Left ventricle myocardium inferior (tissue), 1 donor: ENCODE measurements at regions of chr2 and their contacts with region 1.

Region 1: GRCh38 chr2:129388870-129389269 is 590.6 kb upstream of the RAB6C start:
- DNase-seq: no peak
- H3K4me3 ChIP-seq: no peak overlapping the region
- H3K27ac ChIP-seq: no peak overlapping the region
- H3K4me1 ChIP-seq: no peaks in the 10 kb centered on the region
- H3K27me3 ChIP-seq: peaks cover 21% of the 10 kb centered on the region
- CTCF ChIP-seq: no peak

Region 2: DNA sequence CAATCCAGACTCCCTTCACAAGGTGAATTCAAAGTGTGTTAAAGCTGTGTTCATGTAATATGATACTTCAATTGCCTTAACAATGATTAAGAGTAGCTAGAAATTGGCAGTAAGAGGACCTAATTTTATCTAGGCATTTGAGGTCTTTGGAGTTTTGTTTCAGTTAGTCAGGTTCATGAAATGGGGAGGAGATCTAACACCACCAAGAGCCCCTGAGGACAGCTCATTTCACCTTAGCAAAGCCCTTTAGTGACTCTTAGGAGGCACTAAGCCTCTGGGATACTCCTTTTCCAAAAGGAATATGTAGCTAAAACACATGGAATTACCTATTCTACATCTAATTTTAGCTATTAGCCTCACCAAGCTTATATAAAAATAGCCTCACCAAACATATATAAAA is 125.9 kb before region 1 on chr2:
- intact Hi-C with region 1: loop called (anchors 10 kb)
- DNase-seq: no peak
- H3K4me3 ChIP-seq: no peak overlapping the region
- H3K27ac ChIP-seq: no peak overlapping the region
- H3K4me1 ChIP-seq: no peaks in the 10 kb centered on the region
- H3K27me3 ChIP-seq: peaks cover 4% of the 10 kb centered on the region
- CTCF ChIP-seq: no peak

Region 3: DNA sequence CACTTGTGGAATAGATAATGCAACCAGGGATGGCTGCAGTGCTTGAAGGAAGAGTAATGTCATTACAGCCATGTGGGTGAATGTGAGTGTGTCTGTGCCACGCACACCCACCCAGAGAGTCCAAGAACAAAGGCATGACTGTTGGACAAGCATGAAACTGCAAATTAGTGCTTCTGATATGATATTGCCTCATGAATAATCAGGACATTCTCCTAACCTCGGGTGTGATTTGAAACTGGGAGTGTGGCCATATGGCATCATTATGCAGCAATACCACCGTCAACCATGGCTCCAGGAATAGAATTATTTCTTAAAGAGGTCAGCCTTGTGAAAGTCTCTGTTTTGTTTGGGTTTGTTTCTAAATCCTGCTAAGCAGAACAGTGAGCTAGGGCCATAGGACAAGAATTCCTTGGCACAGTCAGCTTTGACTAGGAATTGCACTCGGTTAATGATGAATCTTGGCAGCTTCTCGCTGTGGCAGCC is 87.4 kb before region 1 on chr2:
- intact Hi-C with region 1: no loop called
- DNase-seq: no peak
- H3K4me3 ChIP-seq: no peak overlapping the region
- H3K27ac ChIP-seq: peak overlapping the region; percentile 65
- H3K4me1 ChIP-seq: peaks cover 29% of the 10 kb centered on the region
- H3K27me3 ChIP-seq: no peaks in the 10 kb centered on the region
- CTCF ChIP-seq: no peak

Region 4: GRCh38 chr2:129548880-129549279 is 160.0 kb after region 1 on chr2:
- intact Hi-C with region 1: no loop called
- DNase-seq: no peak
- H3K4me3 ChIP-seq: no peak overlapping the region
- H3K27ac ChIP-seq: no peak overlapping the region
- H3K4me1 ChIP-seq: no peaks in the 10 kb centered on the region
- H3K27me3 ChIP-seq: peaks cover 34% of the 10 kb centered on the region
- CTCF ChIP-seq: no peak